ENCODE measurements at regions of chr13 and their contacts with region 1.

Region 1: GRCh38 chr13:111066544-111066943 is 48.6 kb upstream of the ARHGEF7 start:
- DNase-seq: no peak
- ATAC-seq: no peak
- H3K4me3 Mint-ChIP-seq: peak overlapping the region; percentile 67
- H3K27ac Mint-ChIP-seq: no peak overlapping the region
- H3K4me1 Mint-ChIP-seq: peaks cover 10% of the 10 kb centered on the region
- H3K27me3 Mint-ChIP-seq: peaks cover 33% of the 10 kb centered on the region
- CTCF ChIP-seq: no peak

Region 2: GRCh38 chr13:111210544-111211469 is 144.3 kb after region 1 on chr13:
- CTCF ChIA-PET with region 1: interaction called, 112 read pairs
- POLR2A ChIA-PET with region 1: no interaction called
- intact Hi-C with region 1: loop called (anchors 1 kb)
- DNase-seq: no peak
- ATAC-seq: no peak
- H3K4me3 Mint-ChIP-seq: no peak overlapping the region
- H3K27ac Mint-ChIP-seq: no peak overlapping the region
- H3K4me1 Mint-ChIP-seq: peaks cover 51% of the 10 kb centered on the region
- H3K27me3 Mint-ChIP-seq: no peaks in the 10 kb centered on the region
- CTCF ChIP-seq: no peak

Region 3: GRCh38 chr13:111225810-111226546 is 159.4 kb after region 1 on chr13:
- CTCF ChIA-PET with region 1: interaction called, 46 read pairs
- POLR2A ChIA-PET with region 1: interaction called, 12 read pairs
- intact Hi-C with region 1: loop called (anchors 1 kb)
- DNase-seq: no peak
- ATAC-seq: no peak
- H3K4me3 Mint-ChIP-seq: no peak overlapping the region
- H3K27ac Mint-ChIP-seq: peak overlapping the region; percentile 16
- H3K4me1 Mint-ChIP-seq: peaks cover 7% of the 10 kb centered on the region
- H3K27me3 Mint-ChIP-seq: no peaks in the 10 kb centered on the region
- CTCF ChIP-seq: no peak

Region 4: DNA sequence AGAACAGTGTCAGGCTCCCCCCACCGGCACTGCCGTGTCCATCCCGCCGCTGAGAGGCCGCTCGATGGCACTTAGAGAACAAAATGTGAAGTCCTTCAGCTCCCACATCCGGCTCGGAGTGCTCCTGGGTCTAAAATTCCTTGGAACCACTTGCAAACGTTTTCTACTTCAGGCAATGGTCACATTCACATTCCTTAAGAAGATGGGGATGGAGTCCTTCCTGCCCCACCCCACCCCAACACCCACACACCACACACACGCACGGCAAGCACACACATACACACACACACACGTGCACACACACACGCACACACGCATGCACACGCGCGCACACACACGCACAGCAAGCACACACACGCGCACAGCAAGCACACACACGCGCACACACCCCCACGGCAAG is 1083.8 kb after region 1 on chr13:
- CTCF ChIA-PET with region 1: no interaction called
- POLR2A ChIA-PET with region 1: no interaction called
- intact Hi-C with region 1: no loop called
- DNase-seq: no peak
- ATAC-seq: no peak
- H3K4me3 Mint-ChIP-seq: no peak overlapping the region
- H3K27ac Mint-ChIP-seq: no peak overlapping the region
- H3K4me1 Mint-ChIP-seq: no peaks in the 10 kb centered on the region
- H3K27me3 Mint-ChIP-seq: peaks cover 5% of the 10 kb centered on the region
- CTCF ChIP-seq: no peak